ENCODE measurements at regions of chr3 and their contacts with region 1.

Region 1: DNA sequence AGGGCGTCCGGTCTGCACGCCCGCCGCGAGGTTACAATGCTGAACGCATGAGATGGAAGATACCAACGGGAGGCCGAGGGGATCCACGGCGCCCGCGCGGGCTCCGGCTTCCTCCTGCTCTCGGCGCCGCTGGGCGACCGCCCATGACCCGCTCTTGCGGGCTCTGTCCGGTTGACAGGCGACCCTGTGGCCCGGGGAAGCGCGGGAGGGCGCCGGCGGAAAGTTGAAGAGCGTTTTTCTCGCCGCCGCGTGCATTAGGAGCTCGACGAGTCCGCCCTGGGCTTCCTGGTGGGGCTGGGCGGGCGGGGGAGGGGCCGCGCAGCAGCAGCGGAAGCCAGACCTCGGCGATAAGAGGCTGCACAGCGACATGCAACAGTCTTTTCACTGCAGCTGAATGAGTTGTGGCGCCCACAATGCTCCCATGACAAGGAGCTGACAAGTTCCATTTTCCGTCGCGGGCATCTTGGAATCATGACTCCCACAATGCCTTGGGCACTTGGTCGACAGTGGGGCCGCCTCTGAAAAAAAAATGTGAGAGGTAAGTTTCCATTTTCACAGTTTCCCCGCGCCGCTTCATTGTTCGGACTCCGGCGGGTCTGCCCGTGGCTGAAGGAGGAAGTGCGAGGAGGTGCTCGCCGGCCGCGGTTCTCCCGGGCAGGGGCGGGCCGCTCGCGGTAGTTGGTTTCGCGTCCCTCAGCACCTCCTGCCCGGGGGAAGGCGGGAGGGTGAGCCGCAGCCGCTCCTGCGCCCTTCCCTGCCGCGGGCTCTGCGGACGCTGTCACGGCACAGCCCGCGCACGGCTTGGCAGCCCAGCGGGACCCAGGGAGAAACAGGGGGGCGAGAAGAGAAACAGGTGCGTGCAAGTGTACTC is at the start of gene MBNL1:
- DNase-seq: peak; percentile 27
- H3K4me3 ChIP-seq: peak within 1 kb of the TSS; percentile 76
- H3K27ac ChIP-seq: peak within 1 kb of the TSS; percentile 97
- H3K27me3 ChIP-seq: no peaks in the 10 kb centered on the region
- CTCF ChIP-seq: no peak
- polyA plus RNA-seq, gene MBNL1: 92.1 and 95.5 TPM in 2 replicates

Region 2: DNA sequence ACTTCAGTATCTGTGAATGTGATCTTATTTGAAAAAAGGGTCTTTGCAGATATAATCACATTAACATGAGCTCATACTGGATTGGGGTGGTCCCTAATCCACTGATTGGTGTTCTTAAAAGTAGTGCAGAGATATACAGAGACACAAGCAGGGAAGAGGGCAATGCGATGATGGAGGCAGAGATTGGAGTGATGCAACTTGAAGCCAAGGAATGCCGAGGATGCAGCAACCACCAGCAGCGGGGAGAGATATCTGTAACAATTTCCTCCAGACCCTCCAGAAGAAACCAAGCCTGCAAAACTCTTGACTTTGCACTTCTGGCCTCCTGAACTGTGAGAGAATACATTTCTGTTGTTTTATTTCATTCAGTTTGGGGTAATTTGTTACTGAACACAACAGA is 171.0 kb before region 1 on chr3:
- CTCF ChIA-PET with region 1: no interaction called
- POLR2A ChIA-PET with region 1: no interaction called
- DNase-seq: no peak
- H3K4me3 ChIP-seq: no peak overlapping the region
- H3K27ac ChIP-seq: no peak overlapping the region
- H3K27me3 ChIP-seq: no peaks in the 10 kb centered on the region
- CTCF ChIP-seq: no peak

Region 3: DNA sequence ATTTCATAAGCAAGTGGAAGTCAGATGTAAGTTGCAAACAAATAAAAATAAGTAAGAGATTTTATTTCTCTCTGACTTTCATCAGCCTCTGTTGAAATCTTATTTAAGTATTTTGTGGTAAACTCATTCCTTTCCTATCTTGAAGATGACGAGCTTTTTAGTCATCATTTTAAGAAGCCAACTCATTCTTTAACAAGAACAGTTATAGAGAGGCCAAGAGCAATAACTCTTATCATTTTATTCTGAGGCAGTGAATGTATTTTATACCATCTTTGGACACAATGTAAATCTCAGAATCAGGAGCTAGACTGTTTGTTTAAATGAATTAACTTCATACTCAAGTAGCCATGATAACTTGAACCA is 147.5 kb before region 1 on chr3:
- CTCF ChIA-PET with region 1: no interaction called
- POLR2A ChIA-PET with region 1: interaction called, 11 read pairs
- DNase-seq: peak; percentile 54
- H3K4me3 ChIP-seq: no peak overlapping the region
- H3K27ac ChIP-seq: no peak overlapping the region
- H3K27me3 ChIP-seq: no peaks in the 10 kb centered on the region
- CTCF ChIP-seq: no peak

Region 4: GRCh38 chr3:152159328-152159727 is 109.5 kb before region 1 on chr3:
- CTCF ChIA-PET with region 1: interaction called, 3 read pairs
- POLR2A ChIA-PET with region 1: interaction called, 27 read pairs
- DNase-seq: peak; percentile 89
- H3K4me3 ChIP-seq: no peak overlapping the region
- H3K27ac ChIP-seq: no peak overlapping the region
- H3K27me3 ChIP-seq: no peaks in the 10 kb centered on the region
- CTCF ChIP-seq: no peak

Region 5: DNA sequence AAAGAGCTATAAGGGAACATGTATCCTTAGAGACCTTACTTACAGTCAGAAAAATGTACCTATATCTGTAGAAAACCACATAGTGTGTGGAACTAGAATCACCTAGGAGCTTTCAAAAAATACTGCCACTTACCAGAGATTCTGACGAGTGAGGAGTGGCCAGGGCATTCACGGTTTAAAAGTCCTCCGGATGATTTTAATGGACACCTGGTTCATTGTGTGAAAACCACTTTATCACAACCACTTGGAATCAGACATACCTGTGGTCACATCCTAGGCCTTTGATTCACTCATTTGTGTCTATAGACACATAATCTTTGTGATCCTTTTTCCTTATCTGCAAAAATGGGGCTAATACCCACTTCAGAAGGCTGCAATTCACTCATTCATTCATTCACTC is 159.8 kb after region 1 on chr3:
- CTCF ChIA-PET with region 1: no interaction called
- POLR2A ChIA-PET with region 1: no interaction called
- DNase-seq: no peak
- H3K4me3 ChIP-seq: no peak overlapping the region
- H3K27ac ChIP-seq: no peak overlapping the region
- H3K27me3 ChIP-seq: no peaks in the 10 kb centered on the region
- CTCF ChIP-seq: no peak

Measured in AG04450 (cell line).